ENCODE measurements at regions of chr17 and their contacts with region 1.

Region 1: GRCh38 chr17:59753522-59754467 is 46.3 kb downstream of the VMP1 start:
- DNase-seq: peak in 1 of 3 donors; percentile 69
- ATAC-seq: peak; percentile 92
- H3K4me3 ChIP-seq: no peak overlapping the region
- H3K4me1 ChIP-seq: peaks cover 11% of the 10 kb centered on the region
- CTCF ChIP-seq: peak; percentile 44

Region 2: DNA sequence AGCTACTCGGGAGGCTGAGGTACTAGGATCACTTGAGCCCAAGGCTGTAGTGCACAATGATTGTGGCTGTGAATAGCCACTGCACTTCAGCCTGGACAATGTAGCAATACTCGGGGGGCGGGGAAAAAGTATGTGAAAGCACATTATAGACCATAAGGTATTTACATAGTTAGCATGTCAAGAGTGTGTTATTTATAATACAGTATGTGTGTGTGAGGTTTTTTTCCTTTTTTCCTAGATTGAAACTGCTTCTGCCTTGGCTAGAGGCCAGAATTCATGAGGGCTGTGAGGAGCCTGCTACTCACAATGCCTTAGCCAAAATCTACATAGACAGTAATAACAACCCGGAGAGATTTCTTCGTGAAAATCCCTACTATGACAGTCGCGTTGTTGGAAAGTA is 77.1 kb before region 1 on chr17:
- intact Hi-C with region 1: no loop called
- DNase-seq: no peak
- ATAC-seq: no peak
- H3K4me3 ChIP-seq: no peak overlapping the region
- H3K4me1 ChIP-seq: peaks cover 14% of the 10 kb centered on the region
- CTCF ChIP-seq: no peak

Region 3: GRCh38 chr17:59837308-59838051 is 83.7 kb after region 1 on chr17:
- intact Hi-C with region 1: no loop called
- DNase-seq: peak in 1 of 3 donors; percentile 88
- ATAC-seq: peak; percentile 84
- H3K4me3 ChIP-seq: peak overlapping the region; percentile 68
- H3K4me1 ChIP-seq: peaks cover 22% of the 10 kb centered on the region
- CTCF ChIP-seq: no peak

Region 4: GRCh38 chr17:59859444-59860025 is 105.7 kb after region 1 on chr17:
- intact Hi-C with region 1: loop called in 1 of 2 experiments (anchors 2 kb)
- DNase-seq: no peak
- ATAC-seq: peak; percentile 73
- H3K4me3 ChIP-seq: no peak overlapping the region
- H3K4me1 ChIP-seq: peaks cover 7% of the 10 kb centered on the region
- CTCF ChIP-seq: peak; percentile 30